ENCODE measurements at regions of chr7 and their contacts with region 1.

Region 1: GRCh38 chr7:146090023-146090645 is 26.5 kb upstream of the CNTNAP2 start:
- DNase-seq: no peak
- H3K4me3 ChIP-seq: no peak overlapping the region
- H3K27ac ChIP-seq: no peak overlapping the region
- H3K27me3 ChIP-seq: peaks cover 0 to 4% (median 0%) of the 10 kb centered on the region in 45 donors
- CTCF ChIP-seq: peak; percentile 51 to 88 (median 76)

Region 2: GRCh38 chr7:145036604-145037405 is 1053.3 kb before region 1 on chr7:
- intact Hi-C with region 1: loop called in 1 of 2 experiments (anchors 10 kb)
- DNase-seq: peak in 2 of 10 donors; percentile 14 to 29
- H3K4me3 ChIP-seq: peak overlapping the region in 23 of 59 donors; percentile 2 to 48 (median 20)
- H3K27ac ChIP-seq: no peak overlapping the region
- H3K27me3 ChIP-seq: no peaks in the 10 kb centered on the region
- CTCF ChIP-seq: peak; percentile 69 to 95 (median 86)

Region 3: GRCh38 chr7:146136357-146136875 is 46.3 kb after region 1 on chr7:
- intact Hi-C with region 1: no loop called
- DNase-seq: no peak
- H3K4me3 ChIP-seq: no peak overlapping the region
- H3K27ac ChIP-seq: no peak overlapping the region
- H3K27me3 ChIP-seq: no peaks in the 10 kb centered on the region
- CTCF ChIP-seq: no peak